ENCODE measurements at regions of chr6 and their contacts with region 1.

Region 1: DNA sequence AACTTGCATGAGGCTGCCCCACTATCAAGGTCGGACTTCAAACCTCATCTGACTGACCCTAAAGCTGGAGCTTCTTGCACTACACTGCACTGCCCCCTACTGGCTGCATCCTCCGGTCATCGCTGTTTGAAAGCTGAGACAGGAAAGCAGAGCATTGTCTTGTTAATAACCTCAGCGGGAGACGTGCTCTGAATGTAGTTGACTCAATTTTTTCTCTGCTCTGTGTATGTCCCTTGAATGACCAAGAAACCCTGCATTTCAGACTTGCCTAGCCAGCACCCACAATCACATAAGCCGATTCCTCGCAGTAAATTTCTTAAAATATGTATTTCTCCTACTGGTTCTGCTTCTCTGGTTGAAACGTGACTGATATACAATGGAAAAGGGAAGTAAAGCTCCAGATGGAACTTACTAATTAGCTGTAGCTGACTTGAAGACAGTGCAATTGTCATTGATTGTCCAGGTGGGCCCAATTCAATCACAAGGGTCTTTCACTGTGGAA is 27.8 kb downstream of the TCF21 start:
- DNase-seq: peak; percentile 92
- H3K4me3 Mint-ChIP-seq: no peak overlapping the region
- H3K27ac Mint-ChIP-seq: no peak overlapping the region
- H3K4me1 Mint-ChIP-seq: no peaks in the 10 kb centered on the region
- H3K27me3 Mint-ChIP-seq: no peaks in the 10 kb centered on the region
- CTCF ChIP-seq: peak; percentile 85

Region 2: GRCh38 chr6:133559926-133560325 is 356.8 kb before region 1 on chr6:
- CTCF ChIA-PET with region 1: no interaction called
- intact Hi-C with region 1: no loop called
- DNase-seq: no peak
- H3K4me3 Mint-ChIP-seq: no peak overlapping the region
- H3K27ac Mint-ChIP-seq: no peak overlapping the region
- H3K4me1 Mint-ChIP-seq: no peaks in the 10 kb centered on the region
- H3K27me3 Mint-ChIP-seq: no peaks in the 10 kb centered on the region
- CTCF ChIP-seq: no peak

Region 3: GRCh38 chr6:133837801-133838349 is 78.8 kb before region 1 on chr6:
- CTCF ChIA-PET with region 1: interaction called, 31 read pairs
- intact Hi-C with region 1: loop called (anchors 1 kb)
- DNase-seq: peak; percentile 86
- H3K4me3 Mint-ChIP-seq: peak overlapping the region; percentile 87
- H3K27ac Mint-ChIP-seq: peak overlapping the region; percentile 70
- H3K4me1 Mint-ChIP-seq: peaks cover 7% of the 10 kb centered on the region
- H3K27me3 Mint-ChIP-seq: no peaks in the 10 kb centered on the region
- CTCF ChIP-seq: peak; percentile 93

Region 4: GRCh38 chr6:134080171-134080795 is 163.6 kb after region 1 on chr6:
- CTCF ChIA-PET with region 1: no interaction called
- intact Hi-C with region 1: no loop called
- DNase-seq: peak; percentile 26
- H3K4me3 Mint-ChIP-seq: no peak overlapping the region
- H3K27ac Mint-ChIP-seq: no peak overlapping the region
- H3K4me1 Mint-ChIP-seq: peaks cover 31% of the 10 kb centered on the region
- H3K27me3 Mint-ChIP-seq: no peaks in the 10 kb centered on the region
- CTCF ChIP-seq: no peak